Lower leg skin (tissue), 4 donors: ENCODE measurements at regions of chr2 and their contacts with region 1.

Region 1: GRCh38 chr2:102615622-102616436 is 3.5 kb upstream of the SLC9A2 start:
- DNase-seq: peak in 1 of 2 donors; percentile 31
- H3K4me3 ChIP-seq: no peak overlapping the region
- CTCF ChIP-seq: peak in 1 of 3 donors; percentile 41
- POLR2A ChIP-seq: no peak

Region 2: DNA sequence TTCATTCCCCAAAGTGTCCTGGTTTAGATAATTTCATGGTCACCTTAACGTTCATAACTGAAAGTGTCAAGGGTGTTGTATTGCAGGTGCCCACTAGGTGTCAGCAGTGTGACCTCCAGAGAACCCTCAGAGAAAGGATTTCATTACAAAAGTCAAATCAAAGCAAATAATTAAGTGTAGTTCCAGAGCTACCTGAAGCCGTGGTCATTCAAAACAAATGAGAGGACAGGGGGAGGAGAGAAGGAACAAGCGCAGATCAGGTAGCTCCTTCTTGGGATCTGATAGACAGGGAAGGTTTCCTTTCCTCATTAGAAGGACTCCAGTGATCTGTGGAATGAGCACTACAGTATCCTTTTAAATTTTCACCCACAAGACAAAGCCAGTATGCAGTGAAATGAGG is 142.8 kb before region 1 on chr2 and contains the start of gene SLC9A4:
- intact Hi-C with region 1: loop called (anchors 5 kb)
- DNase-seq: peak in 1 of 2 donors; percentile 35
- H3K4me3 ChIP-seq: no peak within 1 kb of the TSS
- CTCF ChIP-seq: peak in 1 of 3 donors; percentile 46
- POLR2A ChIP-seq: no peak
- total RNA-seq, gene SLC9A4: 0.15 to 2.7 (median 0.74) TPM in 3 of 4 donors, not detected in the other

Region 3: DNA sequence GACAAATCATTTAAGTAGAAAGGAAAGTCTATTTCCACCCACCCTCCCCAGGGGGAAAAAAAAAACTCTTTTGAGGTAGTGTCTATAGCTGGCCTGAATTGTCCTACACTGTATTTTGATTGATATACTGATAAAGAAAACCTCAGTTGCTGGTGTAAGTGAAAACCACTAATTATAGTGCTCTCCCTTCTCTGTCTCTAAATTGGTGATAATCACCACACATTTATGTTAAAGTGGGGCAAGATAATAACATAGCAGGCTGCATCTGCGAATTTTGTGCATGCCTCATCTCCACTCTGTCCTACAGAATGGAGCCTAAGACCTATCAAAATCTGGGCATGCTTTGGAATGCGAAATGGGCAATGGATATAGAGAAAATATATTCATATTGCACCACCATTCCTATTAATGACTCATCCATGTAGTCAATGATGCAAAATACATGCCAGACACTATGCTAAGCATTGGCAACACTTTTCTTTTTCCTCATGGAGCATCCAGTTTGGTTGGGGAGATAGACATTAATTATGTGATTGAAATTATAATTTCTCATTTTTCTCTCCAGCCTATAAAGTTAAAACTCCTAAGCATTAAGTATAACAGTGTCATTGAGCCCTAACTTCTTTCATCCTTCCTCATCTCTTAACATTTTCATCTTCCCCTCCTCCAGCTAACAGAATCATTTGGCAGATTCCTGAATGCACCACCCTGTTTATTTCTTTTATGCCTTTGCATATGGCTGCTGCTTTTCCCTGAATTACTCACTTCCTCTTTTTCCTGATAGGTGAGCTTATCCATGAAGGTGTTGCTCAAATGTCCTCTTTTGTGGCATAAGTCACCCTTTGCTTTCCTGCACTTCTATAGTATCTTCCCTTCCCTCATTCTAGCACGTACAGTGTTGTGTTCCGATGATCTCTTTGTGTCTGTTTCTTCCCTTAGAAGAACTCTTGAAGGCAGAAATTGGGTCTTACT is 61.7 kb after region 1 on chr2:
- intact Hi-C with region 1: no loop called
- DNase-seq: no peak
- H3K4me3 ChIP-seq: no peak overlapping the region
- CTCF ChIP-seq: no peak
- POLR2A ChIP-seq: no peak